ENCODE measurements at regions of chr11 and their contacts with region 1.

Region 1: GRCh38 chr11:31509429-31510345 is at the starts of genes ELP4 and IMMP1L:
- DNase-seq: peak; percentile 98
- H3K4me3 ChIP-seq: peak within 1 kb of the TSS; percentile 81 to 90 (median 84)
- H3K27ac ChIP-seq: peak within 1 kb of the TSS; percentile 83 to 85 (median 84)
- H3K4me1 ChIP-seq: peaks cover 0 to 24% (median 16%) of the 10 kb centered on the region in 4 donors
- H3K27me3 ChIP-seq: no peaks in the 10 kb centered on the region
- CTCF ChIP-seq: no peak
- EP300 ChIP-seq: no peak
- POLR2A ChIP-seq: peak in 1 of 2 donors; percentile 52
- total RNA-seq, gene ELP4: 18.5 to 32.7 (median 25.9) TPM
- total RNA-seq, gene IMMP1L: 6.6 to 39.0 (median 24.7) TPM

Region 2: DNA sequence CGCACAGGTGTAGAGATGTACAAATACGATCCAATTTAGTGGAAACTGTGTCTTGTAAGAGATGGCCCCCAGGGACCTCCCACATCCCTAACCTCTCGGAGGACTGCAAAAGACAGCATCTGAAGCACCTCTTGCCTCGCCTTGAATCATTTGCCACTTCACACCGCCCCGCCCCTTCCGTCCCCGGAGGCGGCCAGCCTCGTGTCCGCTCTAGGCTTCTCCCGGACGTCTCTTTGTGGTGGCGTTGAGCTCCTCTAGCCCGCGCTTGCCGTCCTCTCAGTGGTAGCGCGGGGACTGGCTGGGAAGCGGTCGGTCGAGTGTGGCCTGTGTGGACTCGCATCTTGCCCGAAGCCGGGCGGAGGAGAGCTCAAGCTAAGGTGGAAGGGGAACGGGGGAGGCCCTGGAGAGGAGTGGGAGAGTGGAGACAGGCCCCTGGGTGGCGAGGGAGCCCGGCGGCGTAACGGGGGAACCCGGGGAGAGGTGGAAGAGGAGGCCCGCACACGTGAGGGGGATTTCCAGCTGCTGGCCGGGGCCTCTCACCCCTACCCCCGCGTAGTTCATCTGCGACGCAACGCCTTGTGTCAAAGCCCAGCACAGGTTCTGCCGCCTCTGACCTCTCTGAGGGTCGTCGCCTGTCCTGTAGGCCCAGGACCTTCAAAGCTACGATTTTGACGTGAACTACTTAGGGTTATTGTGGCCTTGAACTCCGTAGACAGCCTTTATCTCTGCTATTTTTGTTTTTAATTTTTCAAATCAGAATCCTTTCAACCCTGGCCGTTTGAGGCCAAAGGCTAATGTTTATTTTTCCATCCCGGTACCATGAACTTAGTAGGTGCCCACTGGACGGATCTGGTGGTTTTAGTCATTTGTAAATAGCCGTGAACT is 1186.6 kb before region 1 on chr11 and contains the start of gene ARL14EP:
- intact Hi-C with region 1: loop called (anchors 10 kb)
- DNase-seq: peak; percentile 95
- H3K4me3 ChIP-seq: peak within 1 kb of the TSS; percentile 66 to 75 (median 72)
- H3K27ac ChIP-seq: peak within 1 kb of the TSS; percentile 82 to 89 (median 86)
- H3K4me1 ChIP-seq: peaks cover 0 to 36% (median 29%) of the 10 kb centered on the region in 4 donors
- H3K27me3 ChIP-seq: no peaks in the 10 kb centered on the region
- CTCF ChIP-seq: no peak
- EP300 ChIP-seq: no peak
- POLR2A ChIP-seq: peak; percentile 85 to 87
- total RNA-seq, gene ARL14EP: 22.5 to 34.2 (median 30.9) TPM

Region 3: DNA sequence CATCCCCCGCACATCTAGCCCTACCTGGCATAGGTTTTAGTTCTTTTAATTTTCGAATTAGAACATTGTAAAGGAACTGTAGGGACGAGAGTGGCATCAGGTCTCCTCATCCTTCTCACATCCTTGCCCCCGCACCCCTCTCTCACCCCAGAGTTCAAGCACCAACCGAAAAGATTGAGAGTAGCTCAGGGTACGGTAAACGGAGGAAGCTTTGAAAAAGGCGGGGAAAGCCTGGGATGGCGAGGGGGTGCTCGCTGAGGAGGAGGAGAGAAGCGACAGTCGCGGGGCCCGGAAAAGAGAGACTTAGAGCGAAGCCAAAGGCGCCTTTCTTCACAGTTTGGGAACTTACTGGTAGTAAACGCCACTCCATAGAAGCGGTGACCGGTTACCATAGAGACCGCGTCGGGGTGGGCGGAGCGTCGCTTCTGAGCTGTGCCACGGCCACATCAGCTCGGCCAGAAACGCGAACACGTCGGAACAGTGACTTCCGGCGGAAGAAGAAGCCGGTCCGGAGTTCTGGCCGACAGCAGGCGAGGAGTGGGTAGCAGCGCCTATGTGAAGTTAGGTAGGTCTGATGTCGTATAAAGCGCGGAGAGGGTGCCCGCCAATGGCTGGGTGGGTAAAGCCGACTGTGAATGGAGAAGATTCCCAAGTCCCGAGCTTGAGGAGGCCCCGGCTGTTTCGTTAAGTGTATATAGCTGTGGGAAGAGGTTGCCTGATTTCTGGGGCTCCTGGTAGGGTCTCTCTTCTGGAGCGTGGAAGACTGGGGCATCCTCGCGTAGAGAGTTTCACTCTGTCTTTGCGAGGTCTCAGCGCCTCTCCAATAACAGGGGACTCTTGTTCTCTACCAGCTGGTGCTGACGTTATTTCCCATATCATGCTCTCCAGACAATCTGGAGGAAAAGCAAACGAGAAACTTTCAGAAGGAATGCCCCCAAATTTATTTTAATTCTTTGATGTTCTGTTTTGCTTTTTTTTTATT is 140.0 kb before region 1 on chr11 and contains the starts of genes DCDC1 and DNAJC24:
- intact Hi-C with region 1: loop called (anchors 5 kb)
- DNase-seq: peak; percentile 93
- H3K4me3 ChIP-seq: peak within 1 kb of the TSS; percentile 59 to 77 (median 72)
- H3K27ac ChIP-seq: peak within 1 kb of the TSS; percentile 73 to 85 (median 80)
- H3K4me1 ChIP-seq: peaks cover 0 to 26% (median 16%) of the 10 kb centered on the region in 4 donors
- H3K27me3 ChIP-seq: no peaks in the 10 kb centered on the region
- CTCF ChIP-seq: no peak
- EP300 ChIP-seq: no peak
- POLR2A ChIP-seq: peak in 1 of 2 donors; percentile 11
- total RNA-seq, gene DCDC1: 0.27 to 1.1 (median 0.33) TPM in 3 of 4 donors, not detected in the other
- total RNA-seq, gene DNAJC24: 15.8 to 24.6 (median 18.4) TPM

Region 4: DNA sequence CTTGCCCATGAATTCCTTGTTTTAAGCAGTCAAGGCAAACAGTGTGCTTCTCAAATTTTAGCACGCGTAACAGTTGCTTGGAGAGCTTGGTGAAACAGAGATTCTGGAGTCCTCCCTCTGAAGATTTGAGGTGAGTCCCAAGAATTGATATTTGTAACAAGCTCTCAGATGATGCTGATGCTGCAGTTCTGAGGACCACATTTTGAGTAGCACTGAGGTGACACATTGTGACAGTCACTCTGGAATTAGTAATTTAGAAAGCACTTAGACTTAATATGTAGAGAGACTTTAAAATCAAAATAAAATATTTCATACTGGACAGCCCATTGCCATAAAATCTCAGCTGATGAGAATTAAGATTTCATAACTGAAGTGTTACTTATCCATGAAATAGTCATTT is 101.5 kb before region 1 on chr11:
- intact Hi-C with region 1: no loop called
- DNase-seq: no peak
- H3K4me3 ChIP-seq: no peak overlapping the region
- H3K27ac ChIP-seq: no peak overlapping the region
- H3K4me1 ChIP-seq: peaks cover 0 to 6% (median 0%) of the 10 kb centered on the region in 4 donors
- H3K27me3 ChIP-seq: no peaks in the 10 kb centered on the region
- CTCF ChIP-seq: no peak
- EP300 ChIP-seq: no peak
- POLR2A ChIP-seq: no peak

Region 5: DNA sequence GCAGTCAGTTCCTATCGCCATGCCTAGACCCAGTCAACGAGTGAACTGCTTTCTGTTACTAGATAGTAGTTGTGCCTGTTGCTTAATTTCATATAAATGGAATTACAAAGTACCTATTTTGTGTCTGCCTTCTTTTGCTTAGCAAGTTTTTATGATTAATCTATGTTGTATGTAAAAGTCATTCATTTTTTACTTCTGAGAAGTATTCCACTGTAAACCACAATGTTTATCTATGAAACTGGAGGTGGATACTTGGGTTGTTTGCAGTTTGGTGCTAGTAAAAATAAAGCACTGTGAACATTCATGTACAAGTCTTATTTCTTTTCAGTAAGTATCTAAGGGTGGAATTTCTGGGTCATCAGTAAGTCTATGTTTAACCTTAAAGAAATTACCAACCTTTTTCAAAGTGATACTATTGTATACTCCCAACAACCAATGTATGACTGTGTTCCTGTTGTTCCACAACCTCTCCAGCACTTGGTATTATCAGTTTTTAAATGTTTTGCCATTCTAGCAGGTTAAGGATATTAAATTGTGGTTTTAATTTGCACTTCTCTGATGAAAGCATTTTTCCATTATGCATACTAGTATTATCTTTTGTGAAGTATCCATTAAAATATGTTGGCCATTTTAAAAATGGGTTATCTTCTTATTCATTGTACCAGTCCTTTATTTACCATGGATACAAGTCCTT is 71.8 kb before region 1 on chr11:
- intact Hi-C with region 1: no loop called
- DNase-seq: no peak
- H3K4me3 ChIP-seq: no peak overlapping the region
- H3K27ac ChIP-seq: no peak overlapping the region
- H3K4me1 ChIP-seq: no peaks in the 10 kb centered on the region
- H3K27me3 ChIP-seq: no peaks in the 10 kb centered on the region
- CTCF ChIP-seq: no peak
- EP300 ChIP-seq: no peak
- POLR2A ChIP-seq: no peak